ENCODE measurements at regions of chr9 and their contacts with region 1.

Region 1: GRCh38 chr9:34899535-34900158 is 58.4 kb upstream of the PHF24 start:
- DNase-seq: peak; percentile 82
- H3K27ac ChIP-seq: no peak overlapping the region
- CTCF ChIP-seq: peak; percentile 98

Region 2: DNA sequence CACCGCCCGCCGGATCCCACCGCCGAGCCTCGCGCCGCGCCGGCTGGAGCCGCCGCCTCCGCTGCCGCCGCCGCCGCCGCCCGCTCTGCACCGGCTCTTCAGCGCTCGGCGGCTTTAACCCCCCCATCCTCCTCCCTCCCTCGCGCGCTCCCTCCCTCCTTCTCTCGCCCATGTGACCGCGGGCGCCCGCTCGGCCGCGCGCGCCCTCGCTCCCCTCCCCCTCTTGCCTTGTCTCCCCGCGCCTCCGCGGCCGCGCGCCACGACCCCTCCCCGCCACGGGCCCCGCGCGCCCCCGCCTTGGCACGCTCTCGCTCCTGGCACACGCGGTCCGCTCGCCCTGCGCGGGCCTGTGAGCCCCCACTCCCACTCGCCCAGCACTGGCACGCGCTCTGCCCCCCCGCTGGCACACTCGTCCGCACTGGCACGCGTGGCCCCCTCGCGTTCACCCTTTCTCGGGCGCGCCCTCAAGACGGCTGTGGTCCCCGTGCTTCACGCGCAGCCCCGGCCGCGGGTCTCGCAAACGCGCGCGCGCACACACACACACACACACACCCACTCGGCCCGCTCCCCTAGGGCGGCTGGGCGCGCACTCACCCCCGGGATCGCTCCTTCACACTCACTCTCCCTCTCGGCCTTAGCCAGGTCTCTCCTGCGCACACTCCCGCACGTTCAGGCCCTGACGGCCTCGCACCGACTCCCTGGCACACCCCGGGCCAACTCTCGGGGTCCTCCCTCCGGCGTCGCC is 309.8 kb before region 1 on chr9 and contains the start of gene CNTFR:
- CTCF ChIA-PET with region 1: no interaction called
- POLR2A ChIA-PET with region 1: no interaction called
- DNase-seq: no peak
- H3K27ac ChIP-seq: no peak within 1 kb of the TSS
- CTCF ChIP-seq: no peak

Region 3: DNA sequence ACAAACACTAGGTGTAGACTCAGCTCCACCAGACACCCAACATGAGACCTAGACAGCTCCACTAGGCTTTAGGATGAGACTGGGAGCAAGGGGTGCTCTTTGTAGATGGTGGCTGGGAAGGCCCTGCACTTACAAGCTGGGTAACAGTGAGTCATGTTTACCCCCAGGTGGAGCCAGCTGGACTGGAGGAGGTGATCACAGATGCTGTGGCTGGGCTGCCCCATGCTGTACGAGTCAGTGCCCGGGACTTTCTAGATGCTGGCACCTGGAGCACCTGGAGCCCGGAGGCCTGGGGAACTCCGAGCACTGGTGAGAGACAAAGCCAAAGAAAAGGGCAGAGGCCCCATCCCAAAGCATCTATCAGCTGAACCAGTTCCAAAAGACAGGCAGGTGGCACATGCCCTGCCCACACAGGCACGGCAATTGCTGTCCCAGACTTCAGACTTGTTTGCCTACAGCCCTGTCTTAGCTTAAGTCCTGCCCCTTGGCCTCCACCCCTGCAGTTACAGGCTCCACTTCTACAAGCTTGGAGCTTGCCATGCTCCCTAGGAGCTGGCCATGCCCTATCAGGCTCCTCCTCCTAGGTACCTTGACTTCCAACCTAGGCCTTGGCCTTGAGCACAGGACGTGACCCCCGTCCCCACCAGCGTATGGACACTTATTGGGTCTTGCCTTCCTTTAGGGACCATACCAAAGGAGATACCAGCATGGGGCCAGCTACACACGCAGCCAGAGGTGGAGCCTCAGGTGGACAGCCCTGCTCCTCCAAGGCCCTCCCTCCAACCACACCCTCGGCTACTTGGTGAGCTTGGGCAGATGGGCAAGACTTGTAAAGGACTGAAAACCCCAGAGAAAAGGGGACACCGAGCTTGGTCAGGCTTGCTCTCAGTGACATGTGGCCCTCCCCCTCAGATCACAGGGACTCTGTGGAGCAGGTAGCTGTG is 239.8 kb before region 1 on chr9:
- CTCF ChIA-PET with region 1: interaction called, 10 read pairs
- POLR2A ChIA-PET with region 1: no interaction called
- DNase-seq: peak; percentile 48
- H3K27ac ChIP-seq: 0 out of 2 replicates have a peak overlapping the region, but pooled peaks have one; percentile 2
- CTCF ChIP-seq: no peak

Region 4: GRCh38 chr9:34759432-34760134 is 140.1 kb before region 1 on chr9:
- CTCF ChIA-PET with region 1: interaction called, 10 read pairs
- POLR2A ChIA-PET with region 1: no interaction called
- DNase-seq: no peak
- H3K27ac ChIP-seq: no peak overlapping the region
- CTCF ChIP-seq: no peak

Region 5: GRCh38 chr9:34985311-34985899 is 85.8 kb after region 1 on chr9:
- CTCF ChIA-PET with region 1: interaction called, 24 read pairs
- POLR2A ChIA-PET with region 1: no interaction called
- DNase-seq: no peak
- H3K27ac ChIP-seq: no peak overlapping the region
- CTCF ChIP-seq: peak; percentile 94

Region 6: DNA sequence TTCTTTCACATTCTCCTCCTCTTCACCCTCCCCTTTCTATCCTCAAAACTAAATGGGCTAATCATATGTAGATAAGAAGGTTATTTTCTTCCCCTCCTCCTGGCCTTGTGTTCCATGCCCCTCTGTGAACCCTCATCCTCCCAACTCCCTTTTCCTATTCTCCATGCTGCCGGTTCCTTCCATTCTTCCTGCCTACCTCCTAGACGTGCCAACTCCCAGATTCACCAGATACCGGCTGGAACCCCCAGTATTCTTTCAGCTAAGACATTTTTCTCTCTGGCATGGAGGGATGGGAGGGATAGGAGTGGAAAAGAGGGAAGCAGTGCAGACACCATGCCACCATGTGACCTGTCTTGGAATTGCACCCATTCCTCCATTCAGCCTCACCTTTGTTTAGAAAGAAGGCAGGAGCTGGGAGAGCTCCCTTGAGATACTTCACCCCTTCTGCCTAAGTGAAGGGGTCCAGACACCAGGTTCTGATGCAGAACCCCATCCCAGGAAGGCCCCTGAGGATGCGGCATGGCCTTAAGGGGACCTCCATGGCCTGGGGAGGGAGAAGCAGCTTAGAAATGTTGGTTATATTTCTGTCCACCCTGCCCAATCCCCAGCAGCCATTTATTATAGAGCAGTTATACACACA is 94.7 kb after region 1 on chr9:
- CTCF ChIA-PET with region 1: interaction called, 37 read pairs
- POLR2A ChIA-PET with region 1: no interaction called
- DNase-seq: peak; percentile 82
- H3K27ac ChIP-seq: peak overlapping the region; percentile 94
- CTCF ChIP-seq: peak; percentile 88

Region 7: GRCh38 chr9:35051069-35051967 is 151.7 kb after region 1 on chr9:
- CTCF ChIA-PET with region 1: interaction called, 21 read pairs
- POLR2A ChIA-PET with region 1: interaction called, 3 read pairs
- DNase-seq: peak; percentile 58
- H3K27ac ChIP-seq: no peak overlapping the region
- CTCF ChIP-seq: peak; percentile 74

Region 8: DNA sequence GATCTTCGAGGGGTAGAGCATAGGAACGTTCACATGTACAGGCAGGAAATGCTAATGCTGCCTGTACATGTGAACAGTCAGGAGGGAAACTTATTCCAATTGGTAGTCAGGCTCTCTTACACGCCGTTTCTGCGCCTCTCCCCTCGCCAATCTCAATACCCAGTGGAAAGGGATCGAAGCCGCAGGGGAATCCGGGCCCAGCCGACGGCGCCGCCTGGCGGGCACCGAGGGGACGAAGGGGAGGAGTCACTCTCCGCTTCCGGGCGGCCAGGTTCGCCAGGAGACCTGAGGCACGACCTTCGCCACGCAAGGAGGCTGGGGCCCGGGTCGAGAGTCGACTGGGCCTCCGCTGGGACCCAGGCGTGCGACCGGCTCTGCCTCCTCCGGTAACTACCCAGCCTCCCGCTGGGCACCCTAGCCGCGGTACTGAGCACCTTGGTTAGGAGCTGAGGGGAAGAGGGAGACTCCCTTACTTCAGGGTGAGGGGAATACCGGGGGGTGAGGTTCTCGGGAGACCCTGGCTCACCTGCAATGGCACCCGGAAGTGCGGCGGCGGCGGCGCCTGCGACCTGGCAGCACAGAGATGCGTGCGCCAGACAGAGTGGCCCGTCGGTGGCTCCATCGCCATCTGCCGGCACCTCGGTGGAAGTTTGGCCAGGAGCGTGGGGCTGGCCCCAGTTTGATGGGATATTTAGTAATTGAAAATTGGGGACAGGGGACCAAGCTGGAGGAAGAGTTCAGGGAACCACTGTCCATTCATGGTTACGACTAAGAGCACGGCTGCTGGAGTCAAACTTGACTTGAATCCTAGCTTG is 196.6 kb after region 1 on chr9 and contains the start of gene PIGO:
- CTCF ChIA-PET with region 1: interaction called, 15 read pairs
- POLR2A ChIA-PET with region 1: no interaction called
- DNase-seq: peak; percentile 87
- H3K27ac ChIP-seq: peak within 1 kb of the TSS; percentile 91
- CTCF ChIP-seq: peak; percentile 99

Region 9: GRCh38 chr9:35313916-35314315 is 414.3 kb after region 1 on chr9:
- CTCF ChIA-PET with region 1: no interaction called
- POLR2A ChIA-PET with region 1: no interaction called
- DNase-seq: no peak
- H3K27ac ChIP-seq: no peak overlapping the region
- CTCF ChIP-seq: no peak